Activated naive CD4-positive, alpha-beta T cell treated with anti-CD3 and anti-CD28 coated beads for 36 hours (primary cell): ENCODE measurements at regions of chr6 and their contacts with region 1.

Region 1: GRCh38 chr6:150813319-150813992 is 52.0 kb upstream of the MTHFD1L start:
- DNase-seq: peak; percentile 75
- H3K4me3 Mint-ChIP-seq: no peak overlapping the region
- H3K27ac Mint-ChIP-seq: peak overlapping the region; percentile 85
- H3K4me1 Mint-ChIP-seq: peaks cover 23% of the 10 kb centered on the region
- H3K27me3 Mint-ChIP-seq: peaks cover 25% of the 10 kb centered on the region

Region 2: DNA sequence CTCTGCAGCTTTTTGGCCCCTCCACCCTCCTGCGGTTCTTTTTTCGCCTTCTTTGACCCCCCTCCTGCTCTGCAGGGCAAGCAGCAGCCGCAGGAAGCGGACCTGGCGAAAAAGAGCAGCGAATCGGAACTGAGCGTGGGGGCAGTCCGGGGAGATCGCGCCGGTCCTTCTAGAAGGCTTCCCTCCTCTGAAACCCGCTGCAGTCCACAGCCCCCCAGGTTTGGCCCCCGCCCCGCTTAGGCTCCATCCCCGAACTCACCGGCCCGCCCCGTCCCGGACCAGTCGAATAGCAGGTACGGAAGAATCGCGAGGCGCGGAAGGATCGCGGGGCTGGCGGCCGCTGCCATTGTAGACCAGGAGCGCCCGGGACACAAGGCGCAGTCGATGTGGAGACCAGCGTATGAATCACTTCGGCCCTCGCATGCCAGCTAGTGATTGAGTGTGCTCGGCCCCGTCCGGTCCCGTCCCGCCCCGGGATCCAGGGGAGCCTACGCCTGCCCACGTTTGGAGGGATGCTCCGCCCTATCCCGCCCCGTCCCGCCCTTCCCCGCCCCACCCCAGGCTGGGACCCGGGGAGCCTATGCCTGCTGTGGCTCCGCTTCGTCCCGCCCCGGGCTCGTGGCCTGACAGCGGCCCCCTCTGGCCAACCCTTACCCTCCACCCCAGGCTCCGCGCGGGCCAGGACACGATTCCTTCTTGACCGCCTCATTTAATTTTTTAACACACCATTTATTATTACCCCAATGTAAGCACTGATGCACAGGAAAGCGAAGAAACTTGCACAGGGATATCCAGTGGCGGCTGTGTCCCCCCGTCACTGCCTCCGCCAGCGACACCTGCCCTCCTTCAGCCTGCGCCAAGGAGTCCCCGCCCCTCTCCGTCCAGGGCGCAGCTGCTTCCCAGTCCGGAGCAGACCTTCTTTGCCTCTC is 744.5 kb before region 1 on chr6 and contains the start of gene ULBP3:
- CTCF ChIA-PET with region 1: interaction called, 10 read pairs
- intact Hi-C with region 1: no loop called
- DNase-seq: peak; percentile 83
- H3K4me3 Mint-ChIP-seq: peak within 1 kb of the TSS; percentile 72
- H3K27ac Mint-ChIP-seq: no peak within 1 kb of the TSS
- H3K4me1 Mint-ChIP-seq: peaks cover 4% of the 10 kb centered on the region
- H3K27me3 Mint-ChIP-seq: peaks cover 2% of the 10 kb centered on the region
- total RNA-seq, gene ULBP3: not detected

Region 3: GRCh38 chr6:150395398-150396009 is 418.0 kb before region 1 on chr6:
- CTCF ChIA-PET with region 1: interaction called, 11 read pairs
- intact Hi-C with region 1: loop called (anchors 5 kb)
- DNase-seq: peak; percentile 59
- H3K4me3 Mint-ChIP-seq: no peak overlapping the region
- H3K27ac Mint-ChIP-seq: no peak overlapping the region
- H3K4me1 Mint-ChIP-seq: no peaks in the 10 kb centered on the region
- H3K27me3 Mint-ChIP-seq: peaks cover 8% of the 10 kb centered on the region

Region 4: DNA sequence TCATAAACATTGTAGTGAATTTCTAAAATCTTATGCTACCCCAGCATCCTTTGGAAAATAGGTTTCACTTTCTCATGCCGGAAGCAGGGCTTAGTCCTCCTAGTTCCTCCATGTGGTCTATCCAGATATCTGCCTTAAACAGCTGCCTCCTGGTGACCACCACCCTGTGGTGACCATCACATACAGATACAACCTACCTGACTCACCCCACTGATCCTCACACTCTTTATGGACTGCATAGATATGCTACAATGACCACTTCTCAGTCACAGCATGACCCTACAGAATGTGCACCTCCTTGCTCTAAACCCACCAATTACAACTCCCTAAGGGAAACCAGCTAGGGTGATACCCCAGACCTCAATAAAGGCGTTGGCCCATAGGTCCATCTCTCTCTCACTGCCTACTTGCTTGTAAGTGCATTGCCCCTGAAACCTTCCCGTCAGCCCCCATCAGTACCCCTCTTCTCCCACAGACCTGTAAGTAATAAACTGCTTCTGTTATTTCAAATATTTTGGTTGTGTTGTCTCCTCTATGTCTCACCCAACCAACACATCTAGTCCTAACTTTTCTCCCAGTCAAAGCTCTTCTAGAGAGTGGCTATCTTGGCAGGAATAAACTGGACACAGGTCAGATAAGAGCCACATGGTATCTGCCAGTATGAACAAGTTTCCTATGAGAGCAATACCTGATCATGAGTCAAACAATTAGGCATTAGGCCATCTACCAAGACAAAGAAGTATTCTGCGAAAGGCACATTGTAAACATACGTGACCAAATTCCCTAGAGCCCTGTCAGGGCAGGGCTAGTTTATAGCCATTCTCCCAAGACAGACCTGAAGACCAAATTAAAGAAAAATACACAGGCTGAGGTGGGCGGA is 253.2 kb before region 1 on chr6:
- CTCF ChIA-PET with region 1: no interaction called
- intact Hi-C with region 1: no loop called
- DNase-seq: no peak
- H3K4me3 Mint-ChIP-seq: no peak overlapping the region
- H3K27ac Mint-ChIP-seq: no peak overlapping the region
- H3K4me1 Mint-ChIP-seq: no peaks in the 10 kb centered on the region
- H3K27me3 Mint-ChIP-seq: peaks cover 9% of the 10 kb centered on the region

Region 5: GRCh38 chr6:150600301-150601017 is 213.0 kb before region 1 on chr6:
- CTCF ChIA-PET with region 1: interaction called, 4 read pairs
- intact Hi-C with region 1: loop called (anchors 1 kb)
- DNase-seq: peak; percentile 87
- H3K4me3 Mint-ChIP-seq: peak overlapping the region; percentile 84
- H3K27ac Mint-ChIP-seq: peak overlapping the region; percentile 90
- H3K4me1 Mint-ChIP-seq: peaks cover 25% of the 10 kb centered on the region
- H3K27me3 Mint-ChIP-seq: peaks cover 46% of the 10 kb centered on the region

Region 6: GRCh38 chr6:150685860-150686259 is 127.6 kb before region 1 on chr6:
- CTCF ChIA-PET with region 1: interaction called, 7 read pairs
- intact Hi-C with region 1: loop called (anchors 1 kb)
- DNase-seq: peak; percentile 71
- H3K4me3 Mint-ChIP-seq: no peak overlapping the region
- H3K27ac Mint-ChIP-seq: no peak overlapping the region
- H3K4me1 Mint-ChIP-seq: peaks cover 2% of the 10 kb centered on the region
- H3K27me3 Mint-ChIP-seq: no peaks in the 10 kb centered on the region

Region 7: DNA sequence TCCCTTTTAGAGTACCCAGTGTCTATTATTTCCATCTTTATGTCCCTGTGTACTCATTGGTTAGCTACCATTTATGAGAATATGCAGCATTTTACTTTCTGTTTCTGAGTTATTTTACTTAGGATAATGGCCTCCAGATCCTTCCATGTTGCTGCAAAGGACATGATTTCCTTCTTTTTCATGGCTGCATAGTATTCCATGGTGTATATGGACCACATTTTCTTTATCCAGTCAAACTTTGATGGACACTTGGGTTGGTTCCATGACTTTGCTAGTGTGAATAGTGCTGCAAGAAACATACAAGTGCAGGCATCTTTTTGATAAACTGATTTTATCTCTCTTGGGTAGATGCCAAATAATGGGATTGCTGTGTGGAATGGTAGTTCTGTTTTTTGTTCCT is 522.5 kb after region 1 on chr6:
- CTCF ChIA-PET with region 1: interaction called, 3 read pairs
- intact Hi-C with region 1: loop called (anchors 2 kb)
- DNase-seq: no peak
- H3K4me3 Mint-ChIP-seq: no peak overlapping the region
- H3K27ac Mint-ChIP-seq: no peak overlapping the region
- H3K4me1 Mint-ChIP-seq: peaks cover 3% of the 10 kb centered on the region
- H3K27me3 Mint-ChIP-seq: no peaks in the 10 kb centered on the region